Activated B cell treated with CpG ODN at 0.5 μM for 24 hours (primary cell): ENCODE measurements at regions of chr1 and their contacts with region 1.

Region 1: GRCh38 chr1:234592242-234592641 is 17.7 kb downstream of the IRF2BP2 start:
- DNase-seq: no peak
- ATAC-seq: no peak
- H3K4me3 Mint-ChIP-seq: no peak overlapping the region
- H3K27ac Mint-ChIP-seq: no peak overlapping the region
- H3K4me1 Mint-ChIP-seq: no peaks in the 10 kb centered on the region
- H3K27me3 Mint-ChIP-seq: no peaks in the 10 kb centered on the region
- CTCF ChIP-seq: no peak

Region 2: GRCh38 chr1:234149217-234149616 is 443.0 kb before region 1 on chr1:
- CTCF ChIA-PET with region 1: no interaction called
- POLR2A ChIA-PET with region 1: no interaction called
- intact Hi-C with region 1: no loop called
- DNase-seq: no peak
- ATAC-seq: no peak
- H3K4me3 Mint-ChIP-seq: no peak overlapping the region
- H3K27ac Mint-ChIP-seq: no peak overlapping the region
- H3K4me1 Mint-ChIP-seq: no peaks in the 10 kb centered on the region
- H3K27me3 Mint-ChIP-seq: peaks cover 20% of the 10 kb centered on the region
- CTCF ChIP-seq: no peak

Region 3: GRCh38 chr1:234544087-234544579 is 48.1 kb before region 1 on chr1:
- CTCF ChIA-PET with region 1: no interaction called
- POLR2A ChIA-PET with region 1: no interaction called
- intact Hi-C with region 1: loop called (anchors 2 kb)
- DNase-seq: no peak
- ATAC-seq: no peak
- H3K4me3 Mint-ChIP-seq: no peak overlapping the region
- H3K27ac Mint-ChIP-seq: no peak overlapping the region
- H3K4me1 Mint-ChIP-seq: peaks cover 8% of the 10 kb centered on the region
- H3K27me3 Mint-ChIP-seq: peaks cover 4% of the 10 kb centered on the region
- CTCF ChIP-seq: no peak

Region 4: DNA sequence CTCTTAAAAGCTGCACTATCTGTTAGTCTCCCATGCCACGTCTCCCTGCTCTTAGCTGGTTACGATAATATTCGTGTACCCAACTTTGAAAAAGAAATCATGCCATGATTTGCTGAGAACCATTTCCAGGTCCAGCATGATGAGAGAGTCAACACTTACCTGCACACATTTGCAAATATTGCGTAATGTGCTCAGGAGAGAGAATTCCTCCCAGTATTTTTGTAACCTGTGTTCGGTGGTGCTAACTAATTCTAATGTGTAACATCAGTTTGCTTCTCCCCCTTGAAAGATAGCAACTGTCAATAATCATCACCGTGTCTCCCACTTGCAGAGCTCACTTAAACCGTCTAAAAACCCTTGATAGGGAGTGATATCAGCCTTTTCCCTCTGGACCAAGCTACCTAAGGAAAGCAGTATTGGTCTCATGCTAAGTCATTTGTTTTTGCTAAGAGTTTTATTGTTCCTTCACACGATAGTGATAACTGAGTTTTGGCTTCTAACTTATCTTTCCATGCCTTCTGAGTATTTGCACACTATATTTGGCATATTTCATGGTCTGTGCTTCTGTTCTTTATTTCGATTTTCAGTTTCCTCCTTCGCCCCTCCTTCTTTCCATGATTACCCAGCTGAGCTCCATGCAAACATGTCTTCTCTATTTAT is 78.9 kb after region 1 on chr1:
- CTCF ChIA-PET with region 1: no interaction called
- POLR2A ChIA-PET with region 1: no interaction called
- intact Hi-C with region 1: no loop called
- DNase-seq: no peak
- ATAC-seq: no peak
- H3K4me3 Mint-ChIP-seq: no peak overlapping the region
- H3K27ac Mint-ChIP-seq: no peak overlapping the region
- H3K4me1 Mint-ChIP-seq: peaks cover 11% of the 10 kb centered on the region
- H3K27me3 Mint-ChIP-seq: no peaks in the 10 kb centered on the region
- CTCF ChIP-seq: no peak

Region 5: DNA sequence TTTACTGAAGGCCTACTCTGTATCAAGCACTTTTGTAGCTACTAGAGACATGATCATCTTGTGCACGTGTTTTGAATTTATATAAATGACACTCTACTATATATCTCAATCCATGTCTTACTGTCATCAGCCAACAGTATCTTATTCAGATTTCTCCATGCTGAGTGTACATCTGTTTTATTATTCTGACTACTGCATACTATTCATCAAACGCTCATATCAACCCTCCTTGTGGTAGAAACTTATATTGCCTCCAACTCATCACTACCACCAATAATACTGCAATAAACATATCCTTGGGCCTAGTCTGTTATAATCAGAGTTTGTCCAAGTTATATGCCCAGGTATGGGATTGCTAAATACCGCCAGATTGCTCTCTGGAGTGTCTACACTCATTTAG is 99.3 kb after region 1 on chr1:
- CTCF ChIA-PET with region 1: no interaction called
- POLR2A ChIA-PET with region 1: no interaction called
- intact Hi-C with region 1: no loop called
- DNase-seq: no peak
- ATAC-seq: no peak
- H3K4me3 Mint-ChIP-seq: no peak overlapping the region
- H3K27ac Mint-ChIP-seq: no peak overlapping the region
- H3K4me1 Mint-ChIP-seq: peaks cover 8% of the 10 kb centered on the region
- H3K27me3 Mint-ChIP-seq: no peaks in the 10 kb centered on the region
- CTCF ChIP-seq: no peak